ENCODE measurements at regions of chr14 and their contacts with region 1.

Region 1: GRCh38 chr14:103333754-103334643 is at the start of gene EIF5:
- DNase-seq: peak; percentile 97 to 100 (median 99)
- ATAC-seq: peak; percentile 86
- H3K4me3 ChIP-seq: peak within 1 kb of the TSS; percentile 85 to 92
- H3K4me3 Mint-ChIP-seq: peak within 1 kb of the TSS; percentile 97
- H3K27ac ChIP-seq: peak within 1 kb of the TSS; percentile 95 to 96
- H3K27ac Mint-ChIP-seq: peak within 1 kb of the TSS; percentile 99
- H3K4me1 ChIP-seq: peaks cover 23% of the 10 kb centered on the region
- H3K4me1 Mint-ChIP-seq: peaks cover 41% of the 10 kb centered on the region
- H3K27me3 ChIP-seq: no peaks in the 10 kb centered on the region
- H3K27me3 Mint-ChIP-seq: no peaks in the 10 kb centered on the region
- CTCF ChIP-seq: peak; percentile 38
- total RNA-seq, gene EIF5: 711 to 754 TPM

Region 2: GRCh38 chr14:102139248-102140026 is 1194.6 kb before region 1 on chr14 and contains the start of gene WDR20:
- CTCF ChIA-PET with region 1: no interaction called
- POLR2A ChIA-PET with region 1: no interaction called
- intact Hi-C with region 1: loop called (anchors 5 to 10 kb)
- DNase-seq: peak; percentile 98 to 100 (median 99)
- ATAC-seq: peak; percentile 96
- H3K4me3 ChIP-seq: peak within 1 kb of the TSS; percentile 94 to 95
- H3K4me3 Mint-ChIP-seq: peak within 1 kb of the TSS; percentile 99
- H3K27ac ChIP-seq: peak within 1 kb of the TSS; percentile 87 to 91
- H3K27ac Mint-ChIP-seq: peak within 1 kb of the TSS; percentile 98
- H3K4me1 ChIP-seq: peaks cover 25% of the 10 kb centered on the region
- H3K4me1 Mint-ChIP-seq: peaks cover 29% of the 10 kb centered on the region
- H3K27me3 ChIP-seq: no peaks in the 10 kb centered on the region
- H3K27me3 Mint-ChIP-seq: no peaks in the 10 kb centered on the region
- CTCF ChIP-seq: no peak
- total RNA-seq, gene WDR20: 40.8 to 46.3 TPM

Region 3: GRCh38 chr14:102928412-102929240 is 405.4 kb before region 1 on chr14:
- CTCF ChIA-PET with region 1: no interaction called
- POLR2A ChIA-PET with region 1: no interaction called
- intact Hi-C with region 1: loop called in 1 of 2 experiments (anchors 5 kb)
- DNase-seq: peak; percentile 55 to 90 (median 87)
- ATAC-seq: peak; percentile 94
- H3K4me3 ChIP-seq: peak overlapping the region; percentile 51 to 70
- H3K4me3 Mint-ChIP-seq: peak overlapping the region; percentile 79
- H3K27ac ChIP-seq: no peak overlapping the region
- H3K27ac Mint-ChIP-seq: peak overlapping the region; percentile 10
- H3K4me1 ChIP-seq: peaks cover 30% of the 10 kb centered on the region
- H3K4me1 Mint-ChIP-seq: peaks cover 13% of the 10 kb centered on the region
- H3K27me3 ChIP-seq: peaks cover 8 to 24% of the 10 kb centered on the region in 2 experiments
- H3K27me3 Mint-ChIP-seq: peaks cover 13% of the 10 kb centered on the region
- CTCF ChIP-seq: no peak

Region 4: GRCh38 chr14:103067233-103067954 is 266.6 kb before region 1 on chr14:
- CTCF ChIA-PET with region 1: no interaction called
- POLR2A ChIA-PET with region 1: no interaction called
- intact Hi-C with region 1: no loop called
- DNase-seq: no peak
- ATAC-seq: no peak
- H3K4me3 ChIP-seq: no peak overlapping the region
- H3K4me3 Mint-ChIP-seq: no peak overlapping the region
- H3K27ac ChIP-seq: no peak overlapping the region
- H3K27ac Mint-ChIP-seq: no peak overlapping the region
- H3K4me1 ChIP-seq: no peaks in the 10 kb centered on the region
- H3K4me1 Mint-ChIP-seq: no peaks in the 10 kb centered on the region
- H3K27me3 ChIP-seq: peaks cover 0 to 3% of the 10 kb centered on the region in 2 experiments
- H3K27me3 Mint-ChIP-seq: peaks cover 17% of the 10 kb centered on the region
- CTCF ChIP-seq: no peak

Region 5: DNA sequence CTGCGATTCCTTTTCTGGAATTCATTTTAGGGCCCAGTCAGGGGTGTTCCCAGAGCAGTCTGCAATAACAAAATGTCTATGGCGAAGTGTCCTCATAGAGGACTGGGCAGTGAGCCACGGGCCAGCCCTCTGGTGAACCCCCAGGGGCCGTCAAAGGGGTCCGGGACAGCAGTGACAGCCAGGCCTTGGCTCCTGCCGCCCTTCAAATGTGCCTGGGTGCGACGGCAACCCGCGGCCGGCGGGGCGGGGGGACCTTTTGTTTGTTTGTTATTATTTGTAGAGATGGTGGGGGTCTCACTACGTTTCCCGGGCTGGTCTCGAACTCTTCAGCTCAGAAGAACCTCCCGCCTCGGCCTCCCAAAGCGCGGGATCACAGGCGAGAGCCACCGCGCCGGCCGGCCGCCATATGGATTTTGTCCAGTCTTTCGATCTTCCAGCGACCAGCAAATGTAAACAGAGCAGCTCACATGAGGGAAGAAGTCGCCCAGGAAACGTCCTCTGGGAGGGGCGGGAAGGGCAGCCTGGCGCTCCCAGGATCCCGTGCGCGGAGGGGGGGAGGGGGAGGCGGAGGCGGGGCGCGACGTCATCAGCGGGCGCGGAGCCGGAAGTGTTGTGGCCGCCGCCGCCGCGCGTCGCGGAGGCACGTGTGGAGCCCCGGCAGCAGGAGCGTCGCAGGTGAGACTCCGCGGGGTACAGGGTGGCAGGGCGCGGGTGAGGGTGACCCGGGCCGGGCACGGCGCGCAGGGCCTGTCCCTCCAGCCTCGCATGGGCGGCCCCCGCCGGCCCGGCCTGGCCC is 194.8 kb after region 1 on chr14 and contains the start of gene TRMT61A:
- CTCF ChIA-PET with region 1: no interaction called
- POLR2A ChIA-PET with region 1: interaction called, 3 read pairs
- intact Hi-C with region 1: loop called in 1 of 2 experiments (anchors 10 kb)
- DNase-seq: peak; percentile 57 to 89 (median 77)
- ATAC-seq: peak; percentile 90
- H3K4me3 ChIP-seq: peak within 1 kb of the TSS; percentile 87 to 92
- H3K4me3 Mint-ChIP-seq: peak within 1 kb of the TSS; percentile 91
- H3K27ac ChIP-seq: peak within 1 kb of the TSS; percentile 77 to 88
- H3K27ac Mint-ChIP-seq: peak within 1 kb of the TSS; percentile 93
- H3K4me1 ChIP-seq: peaks cover 31% of the 10 kb centered on the region
- H3K4me1 Mint-ChIP-seq: peaks cover 37% of the 10 kb centered on the region
- H3K27me3 ChIP-seq: no peaks in the 10 kb centered on the region
- H3K27me3 Mint-ChIP-seq: peaks cover under 1% of the 10 kb centered on the region
- CTCF ChIP-seq: no peak
- total RNA-seq, gene TRMT61A: 10.9 to 11.6 TPM

Region 6: DNA sequence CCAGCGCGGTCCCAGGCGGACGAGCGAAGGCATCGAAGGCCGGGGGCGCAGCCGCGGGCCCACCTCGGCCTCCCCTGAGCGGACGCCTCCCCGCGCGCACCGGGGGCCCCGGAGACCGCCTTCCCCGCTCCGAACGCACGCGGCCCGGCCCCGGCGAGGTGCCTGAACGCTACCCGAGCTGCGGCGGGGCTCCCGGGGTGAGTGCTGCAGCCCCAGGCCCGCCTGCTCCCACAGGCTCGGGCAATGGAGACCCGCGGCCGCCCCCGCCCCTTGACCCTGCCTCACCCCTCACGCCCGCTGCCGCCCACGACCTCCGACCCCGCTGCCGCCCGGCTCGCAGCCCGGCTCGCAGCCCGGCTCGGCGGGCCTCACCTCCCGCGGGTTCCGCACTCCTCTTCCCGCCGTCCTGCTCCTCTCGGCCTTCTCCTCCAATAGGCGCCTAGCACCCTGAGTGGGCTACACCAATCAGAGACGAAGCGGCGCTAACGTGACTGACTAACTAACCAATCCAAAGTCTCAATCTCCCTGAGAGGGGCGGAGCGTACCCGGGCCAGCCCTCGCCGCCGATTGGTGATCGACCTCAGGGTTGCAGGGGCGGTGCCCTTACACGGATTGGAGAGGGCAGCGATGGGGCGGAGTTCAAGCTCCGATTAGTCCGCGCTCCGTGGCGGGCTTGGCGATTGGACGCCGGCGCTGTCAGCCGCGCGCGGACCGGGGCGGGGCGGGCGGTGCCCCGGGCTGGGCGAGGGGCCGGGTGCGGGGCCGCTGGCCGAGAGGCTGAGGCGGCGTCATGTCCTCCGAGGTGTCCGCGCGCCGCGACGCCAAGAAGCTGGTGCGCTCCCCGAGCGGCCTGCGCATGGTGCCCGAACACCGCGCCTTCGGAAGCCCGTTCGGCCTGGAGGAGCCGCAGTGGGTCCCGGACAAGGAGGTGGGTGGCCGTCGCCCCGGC is 381.3 kb after region 1 on chr14 and contains the starts of genes XRCC3 and ZFYVE21:
- CTCF ChIA-PET with region 1: interaction called, 3 read pairs
- POLR2A ChIA-PET with region 1: interaction called, 4 read pairs
- intact Hi-C with region 1: loop called in 1 of 2 experiments (anchors 5 kb)
- DNase-seq: peak; percentile 99 to 100 (median 99)
- ATAC-seq: peak; percentile 96
- H3K4me3 ChIP-seq: peak within 1 kb of the TSS; percentile 47 to 74
- H3K4me3 Mint-ChIP-seq: peak within 1 kb of the TSS; percentile 97
- H3K27ac ChIP-seq: peak within 1 kb of the TSS in 1 of 2 experiments; percentile 33
- H3K27ac Mint-ChIP-seq: peak within 1 kb of the TSS; percentile 89
- H3K4me1 ChIP-seq: peaks cover 18% of the 10 kb centered on the region
- H3K4me1 Mint-ChIP-seq: peaks cover 43% of the 10 kb centered on the region
- H3K27me3 ChIP-seq: no peaks in the 10 kb centered on the region
- H3K27me3 Mint-ChIP-seq: no peaks in the 10 kb centered on the region
- CTCF ChIP-seq: no peak
- total RNA-seq, gene XRCC3: 5.5 to 6.6 TPM
- total RNA-seq, gene ZFYVE21: 2.5 to 3.7 TPM